H1 (cell line): ENCODE measurements at regions of chr15 and their contacts with region 1.

Region 1: GRCh38 chr15:74407055-74407691 is 26.6 kb downstream of the SEMA7A start:
- DNase-seq: no peak
- H3K4me3 ChIP-seq: no peak overlapping the region
- H3K27ac ChIP-seq: no peak overlapping the region
- H3K4me1 ChIP-seq: peaks cover 0 to 10% (median 3%) of the 10 kb centered on the region in 4 experiments; a peak in 5 of 7 replicates
- H3K27me3 ChIP-seq: no peaks in the 10 kb centered on the region; a peak in 2 of 7 replicates
- CTCF ChIP-seq: no peak
- EP300 ChIP-seq: no peak
- POLR2A ChIP-seq: no peak
- RAD21 ChIP-seq: no peak

Region 2: DNA sequence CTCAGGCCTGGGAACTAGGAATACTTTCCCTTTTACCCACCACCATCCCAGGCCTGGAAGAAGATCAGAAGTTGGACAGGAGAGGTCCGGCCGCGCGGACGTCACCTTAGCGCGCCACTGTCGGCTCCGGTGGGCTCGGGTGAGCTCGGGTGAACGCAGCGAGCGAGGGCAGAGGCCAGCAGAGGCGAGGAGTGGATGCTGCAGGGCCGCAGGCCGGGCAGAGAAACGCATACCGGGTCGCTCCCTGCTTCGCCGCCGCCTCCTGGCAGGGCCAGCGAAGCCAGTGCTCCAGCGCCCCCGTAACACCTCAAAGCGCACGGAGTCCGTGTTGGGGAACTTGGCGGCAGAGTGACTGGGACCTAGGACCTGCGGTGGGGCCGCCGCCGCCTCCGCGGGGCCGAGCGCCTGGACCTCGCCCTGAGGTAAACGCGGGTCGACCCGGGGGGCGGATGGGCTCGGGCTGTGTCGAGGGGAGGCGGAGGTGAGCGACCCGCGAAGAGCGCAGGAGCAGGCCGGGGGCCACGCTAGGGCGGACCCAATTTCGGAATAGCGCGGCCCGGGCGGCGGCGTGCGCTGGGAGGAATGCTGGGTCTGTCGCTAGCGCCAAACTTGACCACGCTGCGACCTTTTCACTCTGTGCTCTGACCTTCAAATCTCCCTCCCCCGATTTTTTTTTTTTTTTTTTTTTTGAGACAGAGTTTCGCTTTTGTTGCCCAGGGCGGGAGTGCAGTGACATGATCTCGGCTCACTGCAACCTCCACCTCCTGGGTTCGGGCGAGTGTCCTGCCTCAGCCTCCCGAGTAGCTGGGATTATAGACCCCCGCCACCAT is 41.3 kb before region 1 on chr15:
- CTCF ChIA-PET with region 1: no interaction called
- POLR2A ChIA-PET with region 1: no interaction called
- DNase-seq: peak in 1 of 2 experiments; percentile 83
- H3K4me3 ChIP-seq: peak overlapping the region; percentile 53 to 67 (median 65)
- H3K27ac ChIP-seq: no peak overlapping the region
- H3K4me1 ChIP-seq: peaks cover 3 to 13% (median 8%) of the 10 kb centered on the region in 4 experiments
- H3K27me3 ChIP-seq: peaks cover 0 to 16% (median 10%) of the 10 kb centered on the region in 4 experiments; a peak in 5 of 7 replicates
- CTCF ChIP-seq: no peak
- EP300 ChIP-seq: no peak
- POLR2A ChIP-seq: peak in 1 of 2 experiments; percentile 78; a peak in 2 of 3 replicates
- RAD21 ChIP-seq: no peak

Region 3: GRCh38 chr15:74382004-74382816 is 25.0 kb before region 1 on chr15:
- CTCF ChIA-PET with region 1: interaction called, 19 read pairs
- POLR2A ChIA-PET with region 1: interaction called, 3 read pairs
- DNase-seq: peak; percentile 78 to 96
- H3K4me3 ChIP-seq: no peak overlapping the region
- H3K27ac ChIP-seq: no peak overlapping the region
- H3K4me1 ChIP-seq: peaks cover 0 to 18% (median 11%) of the 10 kb centered on the region in 4 experiments; a peak in 5 of 7 replicates
- H3K27me3 ChIP-seq: no peaks in the 10 kb centered on the region
- CTCF ChIP-seq: peak; percentile 85 to 98 (median 94)
- EP300 ChIP-seq: no peak
- POLR2A ChIP-seq: no peak
- RAD21 ChIP-seq: peak; percentile 98 to 100

Region 4: GRCh38 chr15:74396445-74397238 is 10.5 kb before region 1 on chr15:
- CTCF ChIA-PET with region 1: interaction called, 12 read pairs
- POLR2A ChIA-PET with region 1: interaction called, 5 read pairs
- DNase-seq: no peak
- H3K4me3 ChIP-seq: no peak overlapping the region
- H3K27ac ChIP-seq: no peak overlapping the region
- H3K4me1 ChIP-seq: peaks cover 0 to 12% (median 7%) of the 10 kb centered on the region in 4 experiments; a peak in 4 of 7 replicates
- H3K27me3 ChIP-seq: no peaks in the 10 kb centered on the region
- CTCF ChIP-seq: no peak
- EP300 ChIP-seq: no peak
- POLR2A ChIP-seq: no peak
- RAD21 ChIP-seq: no peak

Region 5: DNA sequence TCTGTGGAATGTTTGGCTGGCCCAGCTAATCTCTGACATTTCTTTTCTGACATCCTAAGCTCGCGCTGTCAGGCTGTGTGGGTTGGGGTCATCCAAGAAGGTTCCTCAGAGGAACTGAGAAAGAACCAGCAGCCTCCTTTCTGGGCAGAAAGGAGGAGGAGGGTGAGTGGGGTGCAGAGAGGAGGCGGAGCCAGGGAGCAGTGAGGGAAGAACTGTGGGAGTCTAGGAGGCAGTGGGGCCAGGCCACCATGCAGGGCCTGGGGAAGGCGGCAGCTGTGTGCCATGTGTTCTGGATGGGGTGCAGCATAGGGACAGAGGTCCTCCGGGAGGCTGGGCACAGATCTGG is 21.2 kb after region 1 on chr15:
- CTCF ChIA-PET with region 1: interaction called, 14 read pairs
- POLR2A ChIA-PET with region 1: interaction called, 3 read pairs
- DNase-seq: no peak
- H3K4me3 ChIP-seq: no peak overlapping the region
- H3K27ac ChIP-seq: no peak overlapping the region
- H3K4me1 ChIP-seq: peaks cover 0 to 13% (median 5%) of the 10 kb centered on the region in 4 experiments; a peak in 6 of 7 replicates
- H3K27me3 ChIP-seq: peaks cover 0 to 12% (median 9%) of the 10 kb centered on the region in 4 experiments; a peak in 5 of 7 replicates
- CTCF ChIP-seq: no peak
- EP300 ChIP-seq: no peak
- POLR2A ChIP-seq: no peak
- RAD21 ChIP-seq: no peak

Region 6: DNA sequence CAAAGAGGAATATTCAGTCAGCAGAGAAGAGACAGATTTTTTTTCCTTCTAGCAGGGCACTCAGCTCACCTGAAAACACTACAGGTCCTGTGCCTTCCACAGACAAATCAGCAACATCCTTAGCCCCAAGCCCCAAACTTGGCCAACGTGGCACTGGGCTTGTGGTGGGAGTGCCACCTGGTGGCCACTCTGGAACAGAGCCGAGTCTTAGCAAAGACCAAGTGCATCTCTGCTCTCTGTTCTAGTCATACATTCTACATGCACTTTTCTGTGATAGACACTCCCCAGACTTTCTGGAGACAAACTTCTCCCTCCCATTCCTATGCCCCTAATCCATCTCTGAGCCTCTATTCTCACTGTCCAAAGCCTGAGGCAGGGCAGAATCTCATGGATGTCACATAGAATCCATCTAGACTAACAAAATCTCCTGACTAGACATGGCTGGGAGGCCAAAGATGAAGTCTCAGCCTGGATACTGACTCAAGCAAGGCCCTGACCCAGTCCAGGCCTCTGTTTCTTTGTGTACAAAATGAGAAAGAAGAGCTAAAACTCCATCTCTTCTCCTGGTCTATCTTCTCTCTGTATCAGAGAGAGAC is 31.6 kb after region 1 on chr15:
- CTCF ChIA-PET with region 1: interaction called, 48 read pairs
- POLR2A ChIA-PET with region 1: interaction called, 8 read pairs
- DNase-seq: peak in 1 of 2 experiments; percentile 80
- H3K4me3 ChIP-seq: no peak overlapping the region
- H3K27ac ChIP-seq: no peak overlapping the region
- H3K4me1 ChIP-seq: peaks cover 0 to 5% (median 3%) of the 10 kb centered on the region in 4 experiments; a peak in 6 of 7 replicates
- H3K27me3 ChIP-seq: peaks cover 0 to 5% (median 0%) of the 10 kb centered on the region in 4 experiments; a peak in 3 of 7 replicates
- CTCF ChIP-seq: peak; percentile 94 to 99 (median 97)
- EP300 ChIP-seq: no peak
- POLR2A ChIP-seq: no peak
- RAD21 ChIP-seq: peak; percentile 96 to 98